ENCODE measurements at regions of chr9 and their contacts with region 1.

Region 1: DNA sequence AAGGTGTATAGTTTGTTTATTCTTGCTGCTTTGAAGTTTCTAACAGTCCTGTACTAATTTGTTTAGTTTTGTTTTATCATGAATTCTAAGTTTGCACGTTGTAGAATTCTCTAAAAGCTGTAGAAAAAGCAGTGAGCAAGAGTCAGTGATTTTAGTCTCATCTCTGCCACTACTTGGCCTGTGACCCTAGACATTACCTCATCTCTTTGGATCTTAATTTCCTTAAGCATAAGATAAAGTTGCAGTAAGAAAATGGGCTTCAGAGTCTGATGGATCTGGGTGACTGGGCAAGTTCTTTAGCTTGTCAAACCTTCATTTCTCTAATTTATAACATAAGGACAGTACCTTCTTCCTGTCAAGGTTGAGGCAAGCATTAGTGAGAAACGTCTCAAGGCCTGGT is 247.9 kb downstream of the DMRT2 start:
- DNase-seq: no peak
- H3K4me3 ChIP-seq: no peak overlapping the region
- H3K27ac ChIP-seq: no peak overlapping the region
- H3K4me1 ChIP-seq: no peaks in the 10 kb centered on the region
- H3K27me3 ChIP-seq: no peaks in the 10 kb centered on the region
- CTCF ChIP-seq: no peak
- POLR2A ChIP-seq: no peak

Region 2: GRCh38 chr9:1248743-1249142 is 49.3 kb before region 1 on chr9:
- intact Hi-C with region 1: loop called (anchors 10 kb)
- DNase-seq: no peak
- H3K4me3 ChIP-seq: no peak overlapping the region
- H3K27ac ChIP-seq: no peak overlapping the region
- H3K4me1 ChIP-seq: no peaks in the 10 kb centered on the region
- H3K27me3 ChIP-seq: no peaks in the 10 kb centered on the region
- CTCF ChIP-seq: no peak
- POLR2A ChIP-seq: no peak